Mammary epithelial cell (primary cell): ENCODE measurements at regions of chr6 and their contacts with region 1.

Region 1: DNA sequence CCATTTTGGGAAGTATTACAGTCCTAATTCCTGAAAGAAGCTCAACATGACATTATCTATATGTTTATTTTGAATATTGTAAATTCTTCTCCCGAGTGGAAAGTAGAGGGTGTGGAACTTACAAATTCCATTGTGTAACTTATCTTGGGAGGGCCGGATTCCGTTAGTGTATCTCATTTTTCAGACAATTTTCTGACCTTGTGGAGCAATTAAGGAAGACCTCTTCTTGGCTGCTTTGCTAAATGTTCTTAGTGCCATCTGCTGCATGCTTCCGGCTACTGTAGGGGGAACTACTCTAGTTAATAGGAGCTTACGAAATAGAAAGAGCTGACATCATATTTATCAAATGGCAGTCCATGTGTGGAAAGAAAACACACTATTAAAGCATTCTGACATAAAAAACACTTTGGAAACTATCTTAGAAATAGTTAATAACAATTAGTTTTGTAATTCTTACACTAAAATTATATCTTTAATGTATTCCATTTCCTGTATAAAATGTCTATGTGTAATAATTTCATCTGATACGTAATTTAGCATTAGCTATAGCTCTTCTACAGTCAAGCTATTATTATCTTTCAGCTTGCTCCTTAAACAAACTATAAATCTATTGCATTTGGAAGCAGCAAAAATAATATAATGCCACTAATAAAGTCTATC is 41.5 kb upstream of the KCNQ5 start:
- DNase-seq: peak; percentile 67
- H3K4me3 ChIP-seq: no peak overlapping the region
- H3K27ac ChIP-seq: no peak overlapping the region
- H3K4me1 ChIP-seq: no peaks in the 10 kb centered on the region
- H3K27me3 ChIP-seq: no peaks in the 10 kb centered on the region
- CTCF ChIP-seq: peak; percentile 87 to 88

Region 2: GRCh38 chr6:72140795-72141194 is 439.6 kb before region 1 on chr6:
- CTCF ChIA-PET with region 1: no interaction called
- dilution Hi-C with region 1: no loop called
- in situ Hi-C with region 1: loop called in 1 of 2 experiments (anchors 25 kb)
- intact Hi-C with region 1: loop called (anchors 5 kb)
- DNase-seq: peak; percentile 11
- H3K4me3 ChIP-seq: no peak overlapping the region
- H3K27ac ChIP-seq: no peak overlapping the region
- H3K4me1 ChIP-seq: no peaks in the 10 kb centered on the region
- H3K27me3 ChIP-seq: no peaks in the 10 kb centered on the region
- CTCF ChIP-seq: peak; percentile 32 to 46

Region 3: GRCh38 chr6:72246926-72247325 is 333.5 kb before region 1 on chr6:
- CTCF ChIA-PET with region 1: interaction called, 4 read pairs
- dilution Hi-C with region 1: no loop called
- in situ Hi-C with region 1: no loop called
- intact Hi-C with region 1: loop called (anchors 5 kb)
- DNase-seq: peak; percentile 1
- H3K4me3 ChIP-seq: no peak overlapping the region
- H3K27ac ChIP-seq: no peak overlapping the region
- H3K4me1 ChIP-seq: no peaks in the 10 kb centered on the region
- H3K27me3 ChIP-seq: no peaks in the 10 kb centered on the region
- CTCF ChIP-seq: peak in 1 of 2 donors; percentile 12

Region 4: GRCh38 chr6:72418495-72418894 is 161.9 kb before region 1 on chr6:
- CTCF ChIA-PET with region 1: interaction called, 9 read pairs
- dilution Hi-C with region 1: no loop called
- in situ Hi-C with region 1: loop called (anchors 5 kb)
- intact Hi-C with region 1: no loop called
- DNase-seq: no peak
- H3K4me3 ChIP-seq: no peak overlapping the region
- H3K27ac ChIP-seq: no peak overlapping the region
- H3K4me1 ChIP-seq: peaks cover 16% of the 10 kb centered on the region
- H3K27me3 ChIP-seq: no peaks in the 10 kb centered on the region
- CTCF ChIP-seq: no peak

Region 5: GRCh38 chr6:72461144-72461543 is 119.3 kb before region 1 on chr6:
- CTCF ChIA-PET with region 1: interaction called, 13 read pairs
- dilution Hi-C with region 1: no loop called
- in situ Hi-C with region 1: no loop called
- intact Hi-C with region 1: no loop called
- DNase-seq: peak; percentile 9
- H3K4me3 ChIP-seq: no peak overlapping the region
- H3K27ac ChIP-seq: no peak overlapping the region
- H3K4me1 ChIP-seq: peaks cover 8% of the 10 kb centered on the region
- H3K27me3 ChIP-seq: no peaks in the 10 kb centered on the region
- CTCF ChIP-seq: no peak

Region 6: GRCh38 chr6:72748759-72749158 is 168.3 kb after region 1 on chr6:
- CTCF ChIA-PET with region 1: no interaction called
- dilution Hi-C with region 1: no loop called
- in situ Hi-C with region 1: no loop called
- intact Hi-C with region 1: no loop called
- DNase-seq: peak; percentile 98
- H3K4me3 ChIP-seq: no peak overlapping the region
- H3K27ac ChIP-seq: no peak overlapping the region
- H3K4me1 ChIP-seq: peaks cover 28% of the 10 kb centered on the region
- H3K27me3 ChIP-seq: no peaks in the 10 kb centered on the region
- CTCF ChIP-seq: no peak

Region 7: DNA sequence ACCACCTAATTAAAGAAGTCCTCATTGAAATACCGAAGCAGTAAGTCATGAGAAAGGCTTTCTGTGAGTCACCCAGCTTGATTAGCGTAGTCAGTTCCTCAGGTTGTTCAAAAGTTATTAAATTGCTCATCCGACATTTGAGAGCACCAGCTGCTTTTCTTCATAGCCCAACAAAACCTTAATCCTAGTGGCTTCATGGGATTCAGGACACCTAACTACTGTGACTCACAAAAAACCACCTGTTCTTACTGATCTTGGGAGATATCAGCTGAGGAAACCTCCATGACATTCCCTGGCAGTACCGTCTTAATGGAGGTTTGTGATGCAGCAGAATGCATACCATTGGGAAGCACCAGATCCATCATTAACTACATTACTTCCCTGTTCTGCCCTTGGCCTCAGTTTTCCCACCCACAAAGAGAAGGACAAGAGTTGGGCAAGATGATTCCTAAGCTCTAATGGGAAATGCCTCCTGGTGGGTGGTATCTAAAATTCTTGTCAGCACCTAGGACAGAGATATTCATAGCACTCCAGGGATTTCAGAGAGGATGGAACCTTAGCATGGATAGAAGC is 541.1 kb after region 1 on chr6:
- CTCF ChIA-PET with region 1: interaction called, 15 read pairs
- dilution Hi-C with region 1: no loop called
- in situ Hi-C with region 1: no loop called
- intact Hi-C with region 1: no loop called
- DNase-seq: peak; percentile 91
- H3K4me3 ChIP-seq: no peak overlapping the region
- H3K27ac ChIP-seq: no peak overlapping the region
- H3K4me1 ChIP-seq: peaks cover 4% of the 10 kb centered on the region
- H3K27me3 ChIP-seq: no peaks in the 10 kb centered on the region
- CTCF ChIP-seq: peak in 1 of 2 donors; percentile 46